ENCODE measurements at regions of chr3 and their contacts with region 1.

Region 1: DNA sequence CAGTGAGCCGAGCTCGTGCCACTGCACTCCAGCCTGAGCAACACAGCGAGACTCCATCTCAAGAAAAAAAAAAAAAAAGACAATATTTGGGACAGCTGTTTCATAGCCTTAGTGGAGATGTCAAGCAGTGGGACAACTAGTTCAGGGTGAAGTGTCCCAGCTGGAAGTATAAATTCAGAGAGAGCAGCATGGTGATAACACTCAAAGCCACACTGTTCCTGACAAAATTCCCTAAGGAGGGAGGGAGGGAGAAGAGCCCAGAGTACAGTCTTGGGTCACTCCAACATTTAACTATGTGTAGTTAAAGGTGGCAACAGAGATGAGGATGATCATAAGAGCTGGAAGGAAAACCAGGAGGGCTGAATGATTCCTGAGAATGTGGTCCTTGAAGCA is 21.1 kb upstream of the IP6K2 start:
- DNase-seq: no peak
- H3K27ac ChIP-seq: peak overlapping the region; percentile 95
- CTCF ChIP-seq: no peak

Region 2: DNA sequence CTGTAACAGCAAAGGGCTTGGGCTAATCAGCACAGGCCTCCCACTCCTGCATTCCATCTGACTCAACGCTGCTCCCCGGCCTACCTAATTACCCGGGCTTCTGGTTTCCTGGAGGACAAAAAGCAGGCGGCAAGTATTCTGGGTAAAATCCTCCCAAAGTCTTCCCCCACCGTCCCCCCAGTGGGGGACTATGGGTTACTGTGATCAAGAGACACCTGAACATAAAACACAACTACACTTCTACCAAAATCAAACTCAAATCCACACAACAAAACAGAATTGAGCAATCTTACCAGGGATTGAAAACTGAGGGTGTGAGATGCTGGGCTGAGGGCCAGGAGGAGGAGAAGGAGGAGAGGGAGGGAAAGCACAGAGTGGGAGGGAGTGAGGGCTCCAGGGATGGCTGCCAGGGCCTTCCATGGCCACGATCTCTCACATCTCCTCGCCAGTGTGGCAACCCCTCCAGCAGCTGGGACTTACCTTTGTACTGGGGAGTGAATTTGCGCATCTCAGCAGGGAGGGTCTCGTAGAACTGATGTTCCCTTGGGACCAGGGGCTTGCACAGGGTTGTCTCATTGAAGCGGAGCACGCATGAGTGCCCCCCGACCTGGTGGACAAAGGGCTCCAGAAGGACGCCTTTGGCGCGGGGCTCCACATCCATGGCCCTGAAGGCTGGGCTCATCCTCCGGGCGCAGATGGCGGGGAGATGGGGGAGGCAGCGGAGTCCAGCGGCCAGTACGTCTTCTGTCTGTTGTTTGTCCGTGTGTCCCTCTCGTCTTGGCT is 43.3 kb before region 1 on chr3:
- CTCF ChIA-PET with region 1: no interaction called
- POLR2A ChIA-PET with region 1: no interaction called
- DNase-seq: peak; percentile 76
- H3K27ac ChIP-seq: peak overlapping the region; percentile 96
- CTCF ChIP-seq: no peak

Region 3: GRCh38 chr3:49076646-49077045 is 338.5 kb after region 1 on chr3:
- CTCF ChIA-PET with region 1: no interaction called
- POLR2A ChIA-PET with region 1: interaction called, 10 read pairs
- DNase-seq: no peak
- H3K27ac ChIP-seq: no peak overlapping the region
- CTCF ChIP-seq: no peak

Measured in RWPE1 (cell line).